Activated naive CD4-positive, alpha-beta T cell treated with anti-CD3 and anti-CD28 coated beads for 36 hours (primary cell): ENCODE measurements at regions of chrX and their contacts with region 1.

Region 1: GRCh38 chrX:47129157-47129898 is 15.2 kb downstream of the NDUFB11 start:
- DNase-seq: peak; percentile 95
- H3K4me3 Mint-ChIP-seq: peak overlapping the region; percentile 99
- H3K27ac Mint-ChIP-seq: peak overlapping the region; percentile 98
- H3K4me1 Mint-ChIP-seq: peaks cover 5% of the 10 kb centered on the region
- H3K27me3 Mint-ChIP-seq: no peaks in the 10 kb centered on the region

Region 2: GRCh38 chrX:46446727-46447378 is 682.5 kb before region 1 on chrX:
- CTCF ChIA-PET with region 1: no interaction called
- intact Hi-C with region 1: loop called (anchors 2 kb)
- DNase-seq: peak; percentile 89
- H3K4me3 Mint-ChIP-seq: peak overlapping the region; percentile 79
- H3K27ac Mint-ChIP-seq: peak overlapping the region; percentile 83
- H3K4me1 Mint-ChIP-seq: peaks cover 12% of the 10 kb centered on the region
- H3K27me3 Mint-ChIP-seq: no peaks in the 10 kb centered on the region

Region 3: DNA sequence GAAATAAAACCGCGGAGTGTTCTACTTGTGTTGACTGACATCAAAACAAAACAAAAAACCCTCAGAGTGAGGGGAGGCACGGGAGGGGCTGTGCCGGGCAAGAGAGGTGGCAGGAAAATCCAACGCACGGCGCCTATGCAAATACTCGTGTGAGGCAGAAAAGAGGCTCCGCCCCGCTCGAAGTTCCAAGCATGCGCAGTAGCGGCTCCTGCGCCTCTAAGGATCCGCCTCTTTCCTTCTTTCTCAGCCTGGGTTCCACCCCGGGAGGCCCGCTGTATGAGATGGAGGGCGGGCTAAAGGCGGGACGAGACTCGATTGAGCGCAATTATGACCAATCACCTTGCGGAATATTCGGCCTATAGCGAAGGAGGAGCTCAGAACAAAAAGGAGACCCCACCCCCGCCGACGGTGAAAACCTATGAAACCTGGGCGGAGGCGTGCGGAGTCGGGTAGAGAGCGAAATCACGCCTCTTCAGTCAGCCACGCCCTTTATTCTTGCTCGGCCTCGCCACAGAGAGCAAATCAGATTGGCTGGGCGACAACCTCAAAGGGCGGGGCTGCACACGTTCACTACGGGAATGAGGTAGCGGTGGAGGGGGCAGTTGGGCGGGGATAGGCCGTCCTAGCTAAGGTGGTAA is 88.4 kb after region 1 on chrX:
- CTCF ChIA-PET with region 1: no interaction called
- intact Hi-C with region 1: loop called (anchors 1 kb)
- DNase-seq: peak; percentile 98
- H3K4me3 Mint-ChIP-seq: peak overlapping the region; percentile 80
- H3K27ac Mint-ChIP-seq: peak overlapping the region; percentile 98
- H3K4me1 Mint-ChIP-seq: peaks cover 37% of the 10 kb centered on the region
- H3K27me3 Mint-ChIP-seq: no peaks in the 10 kb centered on the region